Activated naive CD4-positive, alpha-beta T cell treated with anti-CD3 and anti-CD28 coated beads, Interleukin-2, amount 10 ng/mL, durations not matched to agents 7 days and 5 days (primary cell): ENCODE measurements at regions of chr1 and their contacts with region 1.

Region 1: DNA sequence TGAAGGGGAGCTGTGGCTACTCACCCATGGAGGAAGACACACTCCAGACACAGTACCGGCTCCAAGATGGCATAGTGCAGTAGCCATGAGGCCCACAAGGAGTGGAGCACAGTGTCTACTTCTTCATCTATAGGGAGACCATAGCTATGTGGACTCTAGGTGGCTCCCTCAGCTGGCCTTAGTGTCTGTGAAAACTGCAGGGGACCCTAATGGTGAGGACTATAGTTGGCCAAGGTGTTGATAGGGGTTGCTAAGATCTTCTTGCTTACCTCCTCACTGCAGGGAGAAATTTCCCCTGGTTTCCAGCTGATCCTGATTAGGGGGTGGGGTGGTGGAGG is 58.9 kb downstream of the DIPK1A start:
- DNase-seq: no peak
- H3K4me3 Mint-ChIP-seq: no peak overlapping the region
- H3K27ac Mint-ChIP-seq: peak overlapping the region; percentile 67
- H3K4me1 Mint-ChIP-seq: peaks cover 30% of the 10 kb centered on the region
- H3K27me3 Mint-ChIP-seq: no peaks in the 10 kb centered on the region

Region 2: GRCh38 chr1:92951141-92951582 is 48.8 kb after region 1 on chr1:
- CTCF ChIA-PET with region 1: interaction called, 11 read pairs
- DNase-seq: peak; percentile 58
- H3K4me3 Mint-ChIP-seq: no peak overlapping the region
- H3K27ac Mint-ChIP-seq: no peak overlapping the region
- H3K4me1 Mint-ChIP-seq: peaks cover 46% of the 10 kb centered on the region
- H3K27me3 Mint-ChIP-seq: no peaks in the 10 kb centered on the region